ENCODE measurements at regions of chr2 and their contacts with region 1.

Region 1: DNA sequence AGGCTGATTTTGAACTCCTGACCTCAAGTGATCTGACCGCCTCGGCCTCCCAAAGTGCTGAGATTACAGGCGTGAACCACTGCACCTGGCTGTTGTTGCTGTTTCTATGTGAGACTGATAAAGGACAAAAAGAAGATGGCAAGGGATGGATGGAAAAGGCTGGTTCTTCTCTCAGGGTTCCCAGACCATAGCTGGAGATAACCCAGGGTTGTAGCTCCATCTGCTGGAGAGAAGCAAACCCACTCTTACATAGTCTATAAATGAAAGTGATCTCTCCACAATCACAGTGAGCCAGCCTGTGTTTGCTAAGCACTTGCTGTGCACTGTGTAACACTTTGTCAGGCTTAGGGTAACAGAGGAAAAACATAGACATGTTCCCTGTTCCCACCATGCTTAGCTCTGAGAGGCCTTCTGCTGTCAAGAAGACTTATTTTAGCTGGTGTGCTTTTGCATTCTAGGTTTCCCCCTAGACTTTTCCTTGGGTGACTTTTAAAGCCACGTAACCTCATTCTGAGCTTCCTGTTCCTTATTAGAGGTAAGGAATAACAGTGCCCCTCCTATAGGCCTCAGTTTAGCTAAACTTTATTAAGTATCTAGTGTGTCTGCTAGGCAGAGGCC is 49.7 kb downstream of the LIMS1 start:
- ATAC-seq: peak; percentile 40 to 100 (median 86)
- H3K4me3 ChIP-seq: no peak overlapping the region
- H3K27ac ChIP-seq: no peak overlapping the region
- H3K4me1 ChIP-seq: no peaks in the 10 kb centered on the region

Region 2: DNA sequence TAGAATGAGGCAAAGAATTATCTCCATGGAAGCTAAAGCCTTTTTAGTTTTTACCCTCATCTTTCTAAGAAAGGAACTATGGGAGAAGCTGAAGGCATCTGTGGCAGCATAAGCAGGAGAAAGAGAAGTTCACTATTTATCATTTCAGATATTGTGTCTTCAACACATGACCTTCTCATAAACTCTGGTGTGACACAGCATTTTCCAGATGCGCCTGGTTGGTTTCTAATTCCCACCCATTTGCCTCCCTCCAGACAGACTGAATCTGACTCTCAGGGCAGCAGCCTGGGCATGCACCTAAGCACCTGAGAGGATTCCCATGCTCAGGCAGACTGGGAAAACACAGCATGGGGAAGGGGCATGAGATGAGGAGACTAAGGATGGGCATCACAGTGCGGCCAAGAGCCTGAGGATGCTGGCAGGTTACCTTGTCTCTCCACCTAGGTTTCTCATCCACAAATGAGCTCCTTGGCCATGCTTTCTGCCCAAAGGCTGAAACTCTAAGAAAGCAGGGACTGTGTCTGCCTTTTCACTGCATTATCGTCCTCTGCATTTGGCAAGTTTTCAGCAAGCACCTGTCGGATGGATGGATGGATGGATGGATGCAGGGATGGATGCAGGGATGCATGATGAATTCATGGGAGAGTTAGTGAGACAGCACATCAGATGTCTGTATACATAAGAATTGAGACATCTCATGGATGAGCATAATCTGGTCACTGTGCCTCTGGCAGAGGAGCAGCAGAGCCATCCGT is 235.0 kb before region 1 on chr2:
- in situ Hi-C with region 1: loop called in 3 of 9 experiments (anchors 10 to 25 kb)
- ATAC-seq: peak in 2 of 8 experiments; percentile 63 to 76
- H3K4me3 ChIP-seq: no peak overlapping the region
- H3K27ac ChIP-seq: no peak overlapping the region
- H3K4me1 ChIP-seq: no peaks in the 10 kb centered on the region

Region 3: DNA sequence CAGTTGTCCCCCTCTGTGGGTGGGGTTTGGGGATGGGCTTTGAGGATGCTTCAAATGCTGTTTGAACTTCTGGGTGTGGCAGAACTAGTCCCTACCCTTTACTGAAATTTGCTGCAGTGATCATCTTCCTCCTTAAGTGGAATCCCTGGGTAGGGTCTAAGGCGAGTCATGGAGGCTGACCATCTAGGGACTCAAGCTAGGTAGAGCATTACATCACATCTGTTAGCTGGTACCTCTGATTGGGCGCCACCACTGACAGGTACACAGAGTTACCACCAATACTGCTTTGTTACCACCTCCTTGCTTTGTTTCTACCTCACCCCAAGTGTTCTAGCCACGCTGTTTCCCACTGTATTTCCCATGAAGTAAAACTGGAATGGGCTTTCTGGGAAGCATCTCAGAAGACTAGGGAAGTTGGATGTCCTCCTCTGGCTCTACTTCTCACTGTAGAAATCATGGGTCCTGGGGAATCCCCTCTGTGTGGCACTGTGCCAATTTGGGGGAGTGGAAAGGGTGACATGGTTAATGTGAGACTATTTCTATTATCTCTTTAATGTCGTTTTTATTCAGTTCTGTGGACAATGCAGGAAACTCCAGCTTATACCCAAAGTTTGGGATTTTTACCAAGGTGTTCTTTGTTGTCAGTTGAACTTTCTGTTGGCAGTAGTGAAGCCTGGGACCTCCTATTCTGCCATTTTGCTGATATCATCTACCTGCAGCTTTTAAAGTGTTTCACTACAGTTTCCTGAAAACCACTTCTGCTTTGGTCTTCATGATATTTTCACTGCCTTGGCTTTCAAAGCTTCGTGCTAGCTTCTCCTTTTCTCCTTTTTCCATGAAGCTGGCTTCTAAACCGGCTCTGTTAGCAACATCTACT is 220.7 kb before region 1 on chr2:
- in situ Hi-C with region 1: loop called in 2 of 9 experiments (anchors 25 kb)
- ATAC-seq: no peak
- H3K4me3 ChIP-seq: no peak overlapping the region
- H3K27ac ChIP-seq: no peak overlapping the region
- H3K4me1 ChIP-seq: no peaks in the 10 kb centered on the region

Measured in motor neuron (in vitro differentiated cells).